Left ventricle myocardium inferior (tissue), 1 donor: ENCODE measurements at regions of chr1 and their contacts with region 1.

Region 1: GRCh38 chr1:8031176-8031785 is 5.2 kb upstream of the ERRFI1 start:
- DNase-seq: no peak
- H3K4me3 ChIP-seq: no peak overlapping the region
- H3K27ac ChIP-seq: no peak overlapping the region
- H3K4me1 ChIP-seq: peaks cover 27% of the 10 kb centered on the region
- H3K27me3 ChIP-seq: no peaks in the 10 kb centered on the region
- CTCF ChIP-seq: peak; percentile 83

Region 2: DNA sequence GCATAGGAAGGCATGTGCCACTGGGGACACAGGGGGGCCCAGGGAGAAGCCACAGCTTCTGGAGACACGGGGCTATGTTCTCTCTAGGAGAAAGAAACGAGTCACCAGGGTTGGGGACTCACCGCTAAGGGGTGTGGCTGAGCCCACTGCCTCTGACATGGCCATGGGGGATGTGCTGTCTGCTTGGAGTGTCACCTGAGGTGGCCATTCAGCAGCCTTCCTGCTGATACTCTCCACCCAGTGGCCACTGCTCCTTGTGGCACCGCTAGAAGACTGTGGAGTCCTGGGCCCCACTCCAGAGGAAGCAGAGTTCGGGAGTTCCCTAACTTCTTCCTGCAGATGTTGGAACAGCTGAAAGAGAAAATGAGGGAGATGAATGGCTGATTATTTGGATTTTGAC is 195.5 kb after region 1 on chr1:
- intact Hi-C with region 1: loop called (anchors 10 kb)
- DNase-seq: no peak
- H3K4me3 ChIP-seq: no peak overlapping the region
- H3K27ac ChIP-seq: no peak overlapping the region
- H3K4me1 ChIP-seq: peaks cover 4% of the 10 kb centered on the region
- H3K27me3 ChIP-seq: peaks cover 21% of the 10 kb centered on the region
- CTCF ChIP-seq: no peak

Region 3: GRCh38 chr1:8314346-8315280 is 283.3 kb after region 1 on chr1:
- intact Hi-C with region 1: loop called (anchors 2 kb)
- DNase-seq: peak; percentile 63
- H3K4me3 ChIP-seq: peak overlapping the region; percentile 3
- H3K27ac ChIP-seq: no peak overlapping the region
- H3K4me1 ChIP-seq: peaks cover 41% of the 10 kb centered on the region
- H3K27me3 ChIP-seq: no peaks in the 10 kb centered on the region
- CTCF ChIP-seq: peak; percentile 88